ENCODE measurements at regions of chr16 and their contacts with region 1.

Region 1: DNA sequence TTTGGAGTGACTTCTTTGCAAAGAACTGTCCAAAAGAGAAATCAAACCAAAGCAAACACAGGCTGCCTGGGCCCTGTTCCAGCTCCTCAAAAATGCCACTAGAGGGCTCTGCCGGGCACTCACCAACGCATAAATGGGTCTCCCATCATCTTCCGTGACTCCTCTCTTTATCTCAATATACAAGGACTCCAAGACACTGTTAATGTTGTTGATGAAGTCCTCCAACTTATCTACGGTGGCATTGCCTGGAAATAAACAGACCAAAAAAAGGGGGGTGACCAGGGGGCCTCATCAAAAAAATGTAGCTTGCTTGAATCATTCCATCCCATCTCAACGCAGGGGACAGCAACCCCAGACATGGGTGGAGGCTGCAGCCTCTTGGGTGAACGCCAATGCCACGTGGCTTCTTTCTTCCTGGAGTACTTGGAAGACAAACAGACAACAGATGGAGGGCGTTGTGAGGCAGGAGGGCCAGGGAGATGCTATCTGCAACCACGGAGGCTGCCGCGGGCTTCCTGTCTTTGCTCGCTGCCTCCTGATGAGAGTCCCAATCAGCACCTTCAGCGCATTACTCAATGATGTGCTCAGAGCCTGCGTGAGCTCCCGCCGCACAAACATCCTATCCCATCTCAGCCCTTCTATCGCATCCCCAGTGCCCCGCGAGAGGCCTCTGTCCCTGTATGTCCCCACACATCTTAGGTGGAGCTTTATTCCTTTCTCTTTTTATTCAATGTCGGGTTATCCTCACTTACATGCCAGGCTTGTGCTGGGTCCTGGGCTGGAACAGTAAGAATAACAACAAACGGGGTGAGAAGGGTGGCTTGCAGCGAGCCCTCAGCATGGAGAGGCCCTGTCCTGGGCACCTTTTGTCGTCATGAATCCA is 32.0 kb downstream of the KDM8 start:
- DNase-seq: peak; percentile 54 to 88 (median 74)

Region 2: DNA sequence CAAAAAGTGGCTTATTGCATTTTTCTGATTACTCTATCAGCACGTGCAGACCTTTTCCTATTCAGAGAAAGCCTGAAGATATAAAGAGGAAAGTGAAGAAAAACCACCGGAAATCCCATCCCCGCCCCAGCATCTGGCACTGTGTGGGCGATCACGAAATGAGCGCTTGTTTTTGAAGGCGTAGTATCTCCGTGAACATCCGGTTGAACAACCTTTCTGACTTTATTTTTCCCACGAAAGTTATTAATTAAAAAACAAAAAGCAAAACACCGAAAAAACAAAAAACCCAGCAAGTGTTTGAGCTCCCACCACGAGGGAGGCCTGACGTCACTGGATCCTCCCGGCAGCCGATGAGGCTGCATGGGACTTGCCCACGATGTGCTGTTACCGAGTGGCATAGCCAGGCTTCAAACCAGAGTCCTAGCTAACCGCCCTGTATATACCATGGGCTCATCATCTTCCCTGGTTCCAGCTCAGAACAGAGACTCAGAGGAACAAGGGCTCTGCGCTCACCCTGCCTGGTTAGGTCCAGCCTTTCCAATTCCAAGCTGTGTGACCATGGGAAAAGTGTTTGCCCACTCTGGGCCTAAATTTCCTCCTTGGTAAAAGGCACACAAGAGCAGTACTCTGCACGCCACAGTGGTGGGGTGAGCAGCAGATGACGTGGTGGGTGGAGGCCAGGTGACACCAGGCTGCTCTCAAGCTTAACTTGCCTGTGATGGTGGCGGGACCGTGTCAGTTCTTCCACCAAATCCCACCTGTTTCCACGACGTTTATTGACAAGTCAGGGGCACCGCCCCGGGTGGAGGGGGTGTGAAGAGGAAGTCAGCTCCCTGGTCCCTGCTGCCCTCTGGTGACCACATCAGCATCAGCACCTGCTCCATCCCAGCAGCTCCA is 132.4 kb after region 1 on chr16:
- intact Hi-C with region 1: loop called (anchors 5 kb)
- DNase-seq: peak; percentile 43 to 86 (median 69)